ENCODE measurements at regions of chr2 and their contacts with region 1.

Region 1: GRCh38 chr2:218301176-218301819 is 9.0 kb upstream of the TMBIM1 start:
- DNase-seq: peak; percentile 97
- H3K4me3 Mint-ChIP-seq: no peak overlapping the region
- H3K27ac Mint-ChIP-seq: no peak overlapping the region
- H3K4me1 Mint-ChIP-seq: peaks cover 5% of the 10 kb centered on the region
- H3K27me3 Mint-ChIP-seq: no peaks in the 10 kb centered on the region

Region 2: GRCh38 chr2:218317232-218317630 is 15.9 kb after region 1 on chr2:
- intact Hi-C with region 1: loop called (anchors 2 kb)
- DNase-seq: no peak
- H3K4me3 Mint-ChIP-seq: peak overlapping the region; percentile 10
- H3K27ac Mint-ChIP-seq: peak overlapping the region; percentile 84
- H3K4me1 Mint-ChIP-seq: peaks cover 23% of the 10 kb centered on the region
- H3K27me3 Mint-ChIP-seq: no peaks in the 10 kb centered on the region

Region 3: GRCh38 chr2:218357236-218358159 is 56.2 kb after region 1 on chr2:
- intact Hi-C with region 1: loop called (anchors 1 kb)
- DNase-seq: no peak
- H3K4me3 Mint-ChIP-seq: no peak overlapping the region
- H3K27ac Mint-ChIP-seq: no peak overlapping the region
- H3K4me1 Mint-ChIP-seq: no peaks in the 10 kb centered on the region
- H3K27me3 Mint-ChIP-seq: peaks cover 2% of the 10 kb centered on the region

Region 4: GRCh38 chr2:218466016-218466521 is 164.8 kb after region 1 on chr2:
- intact Hi-C with region 1: loop called (anchors 2 kb)
- DNase-seq: no peak
- H3K4me3 Mint-ChIP-seq: no peak overlapping the region
- H3K27ac Mint-ChIP-seq: no peak overlapping the region
- H3K4me1 Mint-ChIP-seq: peaks cover 9% of the 10 kb centered on the region
- H3K27me3 Mint-ChIP-seq: no peaks in the 10 kb centered on the region

Region 5: DNA sequence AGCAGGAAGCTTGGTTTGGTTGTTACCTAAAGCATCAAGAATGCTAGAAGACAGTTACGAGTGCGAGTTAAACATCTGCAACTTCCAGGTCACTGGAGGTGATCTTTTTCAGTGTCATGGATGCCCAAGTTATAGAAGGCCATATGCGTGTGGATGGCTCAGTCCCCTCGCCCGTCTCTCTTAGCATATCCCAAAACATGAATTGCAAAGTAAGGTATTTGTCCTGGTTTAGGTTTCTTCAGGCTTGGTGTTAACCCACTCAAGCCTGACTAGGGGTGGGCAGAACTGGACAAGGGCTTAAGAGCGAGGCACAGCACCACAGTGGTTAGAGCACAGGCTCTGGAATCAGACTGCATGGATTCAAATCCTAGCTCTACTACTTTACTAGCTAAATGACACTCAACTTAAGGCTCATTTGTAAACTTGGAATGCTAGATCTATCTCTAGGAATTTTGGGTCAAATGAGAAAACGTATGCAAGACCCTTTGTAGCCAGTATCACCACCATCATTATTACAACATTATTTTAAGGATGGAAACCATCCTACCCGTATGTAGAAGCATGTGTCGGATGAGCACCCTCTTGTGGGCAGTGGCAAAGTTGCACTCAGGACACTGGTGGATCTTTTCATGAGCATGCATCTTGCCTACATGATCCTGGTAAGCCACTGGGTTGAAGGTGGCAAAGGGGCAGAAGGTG is 346.9 kb after region 1 on chr2:
- intact Hi-C with region 1: loop called (anchors 2 kb)
- DNase-seq: peak; percentile 88
- H3K4me3 Mint-ChIP-seq: no peak overlapping the region
- H3K27ac Mint-ChIP-seq: no peak overlapping the region
- H3K4me1 Mint-ChIP-seq: peaks cover 4% of the 10 kb centered on the region
- H3K27me3 Mint-ChIP-seq: no peaks in the 10 kb centered on the region

Measured in activated CD4-positive, alpha-beta T cell treated with anti-CD3 and anti-CD28 coated beads, Interleukin-2, amount 10 ng/mL, durations not matched to agents 24 days and 14 days (primary cell).